RWPE1 (cell line): ENCODE measurements at regions of chr7 and their contacts with region 1.

Region 1: DNA sequence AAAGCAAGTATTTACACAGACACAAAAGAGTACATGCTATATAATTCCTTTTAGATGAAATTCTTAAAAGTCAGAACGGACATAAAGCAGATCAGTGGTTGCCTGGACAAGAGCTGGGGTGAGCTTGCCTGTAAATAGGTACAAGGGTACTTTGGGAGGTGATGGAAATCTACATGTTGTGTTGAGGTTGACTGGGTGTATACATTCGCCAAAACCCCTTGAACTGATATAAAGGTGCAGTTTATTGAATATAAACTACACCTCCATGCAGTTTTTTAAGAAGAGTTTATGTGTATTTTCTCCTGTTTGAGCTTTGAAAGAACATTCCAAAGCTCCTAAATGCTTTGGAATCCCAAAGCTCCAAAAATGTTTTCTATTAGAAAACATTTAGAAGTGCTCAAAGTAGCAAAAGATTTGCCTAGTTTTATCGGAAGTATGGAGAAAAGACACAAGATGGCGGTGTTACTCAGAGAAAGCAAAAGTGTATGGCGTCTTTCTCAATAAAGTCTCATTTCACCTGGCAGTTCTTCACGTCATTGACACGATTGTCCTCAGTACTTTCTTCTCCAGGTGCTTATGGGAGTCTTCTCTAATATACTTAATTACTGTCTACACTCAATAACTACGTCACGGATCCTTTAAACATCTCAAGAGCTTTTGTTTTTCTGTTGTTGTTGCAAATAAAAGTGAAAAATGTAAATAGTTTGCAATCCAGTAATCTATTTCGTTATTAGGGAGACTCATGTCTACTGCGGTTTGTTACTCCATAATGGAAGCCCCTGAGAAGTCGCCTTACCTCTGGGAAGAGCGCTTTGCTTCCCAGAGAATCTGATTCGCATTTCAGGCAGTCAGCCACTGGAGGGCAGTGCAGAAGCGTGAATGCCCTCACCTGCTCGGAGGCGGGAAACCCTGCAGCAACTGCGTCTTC is 14.7 kb upstream of the SEC61G start:
- DNase-seq: peak; percentile 77
- H3K27ac ChIP-seq: peak overlapping the region; percentile 55
- CTCF ChIP-seq: peak; percentile 93

Region 2: GRCh38 chr7:53920011-53920410 is 853.7 kb before region 1 on chr7:
- CTCF ChIA-PET with region 1: no interaction called
- POLR2A ChIA-PET with region 1: no interaction called
- DNase-seq: no peak
- H3K27ac ChIP-seq: no peak overlapping the region
- CTCF ChIP-seq: no peak

Region 3: GRCh38 chr7:54839538-54840213 is 65.9 kb after region 1 on chr7:
- CTCF ChIA-PET with region 1: interaction called, 18 read pairs
- POLR2A ChIA-PET with region 1: no interaction called
- DNase-seq: peak; percentile 75
- H3K27ac ChIP-seq: peak overlapping the region; percentile 21
- CTCF ChIP-seq: peak; percentile 89

Region 4: GRCh38 chr7:54932818-54933543 is 159.2 kb after region 1 on chr7:
- CTCF ChIA-PET with region 1: no interaction called
- POLR2A ChIA-PET with region 1: no interaction called
- DNase-seq: peak; percentile 79
- H3K27ac ChIP-seq: peak overlapping the region; percentile 87
- CTCF ChIP-seq: no peak

Region 5: DNA sequence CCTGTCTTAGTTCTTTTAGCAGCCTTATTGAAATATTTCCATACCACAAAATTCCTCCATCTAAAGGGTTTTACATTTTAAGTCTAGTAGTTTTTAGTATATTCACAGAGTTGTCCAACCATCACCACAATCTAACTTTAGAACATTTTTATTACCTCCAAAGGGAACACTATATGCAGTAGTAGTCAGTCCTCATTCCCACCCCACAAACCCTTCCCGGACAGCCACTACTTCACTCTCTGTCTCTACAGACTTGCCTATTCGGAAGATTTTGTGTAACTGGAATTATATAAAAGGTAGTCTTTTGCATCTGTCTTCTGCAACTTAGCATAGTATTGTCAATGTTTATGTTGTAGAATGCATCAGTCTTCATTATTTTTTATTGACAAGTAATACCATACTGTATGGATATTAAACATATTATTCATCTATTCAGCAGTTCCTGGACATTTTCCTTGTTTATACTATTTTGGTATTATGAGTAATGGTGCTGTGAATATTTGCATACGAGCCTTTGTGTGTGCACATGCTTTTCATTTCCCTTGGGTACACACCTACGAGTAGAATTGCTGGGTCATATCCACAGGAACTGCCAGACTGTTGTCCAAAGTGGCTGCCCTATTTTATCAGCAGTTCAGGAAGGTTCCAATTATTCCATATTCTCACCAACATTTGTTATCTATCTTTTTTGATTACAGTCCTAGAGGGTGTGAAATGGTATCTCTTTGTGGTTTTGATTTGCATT is 530.5 kb after region 1 on chr7:
- CTCF ChIA-PET with region 1: interaction called, 11 read pairs
- POLR2A ChIA-PET with region 1: no interaction called
- DNase-seq: no peak
- H3K27ac ChIP-seq: no peak overlapping the region
- CTCF ChIP-seq: no peak